Prostate gland (tissue), 2 donors: ENCODE measurements at regions of chr9 and their contacts with region 1.

Region 1: GRCh38 chr9:6757456-6758247 is at the start of gene KDM4C:
- DNase-seq: peak; percentile 96
- H3K4me3 ChIP-seq: peak within 1 kb of the TSS; percentile 92 to 97
- H3K27ac ChIP-seq: peak within 1 kb of the TSS; percentile 95 to 98
- H3K4me1 ChIP-seq: no peaks in the 10 kb centered on the region
- H3K27me3 ChIP-seq: no peaks in the 10 kb centered on the region
- CTCF ChIP-seq: no peak
- POLR2A ChIP-seq: peak; percentile 91
- total RNA-seq, gene KDM4C: 18.1 to 27.7 TPM

Region 2: GRCh38 chr9:6681147-6681956 is 76.3 kb before region 1 on chr9:
- intact Hi-C with region 1: loop called (anchors 1 kb)
- DNase-seq: peak; percentile 93
- H3K4me3 ChIP-seq: peak overlapping the region; percentile 62 to 70
- H3K27ac ChIP-seq: peak overlapping the region; percentile 90 to 97
- H3K4me1 ChIP-seq: no peaks in the 10 kb centered on the region
- H3K27me3 ChIP-seq: no peaks in the 10 kb centered on the region
- CTCF ChIP-seq: peak in 2 of 4 experiments; percentile 11 to 45
- POLR2A ChIP-seq: peak; percentile 69